Activated CD8-positive, alpha-beta T cell treated with anti-CD3 and anti-CD28 coated beads, Interleukin-2, amount 10 ng/mL, durations not matched to agents 7 days and 5 days (primary cell): ENCODE measurements at regions of chr1 and their contacts with region 1.

Region 1: GRCh38 chr1:200971955-200972711 is 51.4 kb downstream of the KIF21B start:
- DNase-seq: peak; percentile 66
- ATAC-seq: no peak
- H3K4me3 Mint-ChIP-seq: no peak overlapping the region
- H3K27ac Mint-ChIP-seq: no peak overlapping the region
- H3K4me1 Mint-ChIP-seq: peaks cover 10% of the 10 kb centered on the region
- H3K27me3 Mint-ChIP-seq: no peaks in the 10 kb centered on the region

Region 2: DNA sequence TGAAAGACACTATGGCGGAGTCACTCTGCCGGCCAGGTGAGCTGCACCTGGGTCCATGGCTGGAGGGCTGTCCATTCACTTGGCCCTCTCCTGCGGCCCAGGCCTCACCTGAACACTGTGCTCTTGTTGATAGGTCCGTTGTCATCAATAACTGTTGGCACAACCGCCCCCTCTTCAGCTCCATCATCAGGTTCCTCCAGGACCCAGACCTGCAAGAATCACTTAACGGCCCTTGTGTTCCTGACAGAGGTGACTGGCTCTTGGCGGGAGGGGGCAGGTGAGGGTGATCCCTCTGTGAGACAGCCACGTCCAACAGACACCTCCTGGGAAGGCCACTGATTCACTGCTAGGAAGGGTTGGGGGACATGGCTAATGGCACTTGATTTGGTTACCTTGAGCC is 22.5 kb before region 1 on chr1:
- CTCF ChIA-PET with region 1: interaction called, 16 read pairs
- POLR2A ChIA-PET with region 1: interaction called, 3 read pairs
- DNase-seq: no peak
- ATAC-seq: no peak
- H3K4me3 Mint-ChIP-seq: no peak overlapping the region
- H3K27ac Mint-ChIP-seq: no peak overlapping the region
- H3K4me1 Mint-ChIP-seq: no peaks in the 10 kb centered on the region
- H3K27me3 Mint-ChIP-seq: peaks cover 30% of the 10 kb centered on the region

Region 3: DNA sequence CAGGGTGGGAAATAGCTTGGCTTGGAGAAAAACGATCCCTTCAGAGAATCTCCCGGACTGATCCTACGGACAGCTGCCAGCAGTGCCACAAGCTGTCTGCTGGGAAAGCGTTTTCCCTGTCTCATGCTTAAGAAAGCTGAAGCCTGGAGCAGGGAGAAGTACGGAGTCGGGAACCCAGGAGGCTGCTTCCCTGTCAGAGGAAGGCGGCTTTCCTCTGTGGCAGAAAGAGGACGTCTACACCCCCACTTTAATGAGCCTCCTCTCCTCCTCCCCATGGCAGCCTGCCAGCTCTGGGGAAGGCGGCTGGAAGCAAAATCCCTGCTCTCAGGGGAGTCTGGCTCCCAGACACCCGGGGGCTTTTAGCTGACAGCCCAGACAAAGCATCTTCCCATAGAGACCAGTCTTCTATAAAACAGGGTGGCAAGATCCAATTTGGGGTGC is 44.1 kb after region 1 on chr1:
- CTCF ChIA-PET with region 1: interaction called, 130 read pairs
- POLR2A ChIA-PET with region 1: interaction called, 9 read pairs
- DNase-seq: no peak
- ATAC-seq: no peak
- H3K4me3 Mint-ChIP-seq: peak overlapping the region; percentile 65
- H3K27ac Mint-ChIP-seq: peak overlapping the region; percentile 100
- H3K4me1 Mint-ChIP-seq: peaks cover 97% of the 10 kb centered on the region
- H3K27me3 Mint-ChIP-seq: no peaks in the 10 kb centered on the region

Region 4: GRCh38 chr1:201042779-201043461 is 70.8 kb after region 1 on chr1:
- CTCF ChIA-PET with region 1: interaction called, 89 read pairs
- POLR2A ChIA-PET with region 1: interaction called, 3 read pairs
- DNase-seq: peak; percentile 79
- ATAC-seq: peak; percentile 91
- H3K4me3 Mint-ChIP-seq: no peak overlapping the region
- H3K27ac Mint-ChIP-seq: no peak overlapping the region
- H3K4me1 Mint-ChIP-seq: no peaks in the 10 kb centered on the region
- H3K27me3 Mint-ChIP-seq: peaks cover 22% of the 10 kb centered on the region

Region 5: GRCh38 chr1:201114236-201115131 is 142.4 kb after region 1 on chr1:
- CTCF ChIA-PET with region 1: interaction called, 30 read pairs
- POLR2A ChIA-PET with region 1: no interaction called
- DNase-seq: peak; percentile 79
- ATAC-seq: peak; percentile 91
- H3K4me3 Mint-ChIP-seq: peak overlapping the region; percentile 74
- H3K27ac Mint-ChIP-seq: peak overlapping the region; percentile 63
- H3K4me1 Mint-ChIP-seq: peaks cover 8% of the 10 kb centered on the region
- H3K27me3 Mint-ChIP-seq: peaks cover 11% of the 10 kb centered on the region